Naive thymus-derived CD4-positive, alpha-beta T cell (primary cell): ENCODE measurements at regions of chr3 and their contacts with region 1.

Region 1: DNA sequence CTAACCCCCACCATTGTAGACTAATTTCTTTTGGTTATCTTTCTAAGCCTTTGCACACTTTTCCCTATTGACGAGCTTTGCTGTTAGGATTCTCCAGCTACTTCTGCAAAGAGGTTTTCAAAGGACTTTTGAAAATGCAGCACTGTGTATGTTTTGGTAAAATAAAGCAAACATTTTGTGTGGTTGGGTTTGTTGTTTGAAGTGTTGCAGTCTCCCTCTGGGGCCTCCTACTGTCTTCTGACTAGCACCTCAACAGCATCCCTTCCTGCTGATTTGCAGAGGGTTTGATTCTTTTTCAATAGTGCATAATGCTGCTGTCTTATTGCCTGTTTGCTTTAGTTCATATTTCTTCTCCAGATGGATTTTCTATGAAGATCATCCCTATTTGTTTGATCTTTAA is 775.1 kb upstream of the CFAP20DC start:
- DNase-seq: peak in 1 of 9 donors; percentile 2
- ATAC-seq: no peak
- H3K4me3 ChIP-seq: no peak overlapping the region
- H3K4me3 Mint-ChIP-seq: peak overlapping the region in 2 of 10 donors; percentile 0 to 12
- H3K27ac ChIP-seq: no peak overlapping the region
- H3K27ac Mint-ChIP-seq: peak overlapping the region in 4 of 9 donors; percentile 8 to 65 (median 14)
- H3K4me1 ChIP-seq: peaks cover 0 to 4% of the 10 kb centered on the region in 2 donors
- H3K4me1 Mint-ChIP-seq: peaks cover 13 to 98% (median 84%) of the 10 kb centered on the region in 7 donors
- H3K27me3 ChIP-seq: no peaks in the 10 kb centered on the region
- H3K27me3 Mint-ChIP-seq: no peaks in the 10 kb centered on the region

Region 2: GRCh38 chr3:59839810-59840515 is 15.1 kb after region 1 on chr3:
- CTCF ChIA-PET with region 1: no interaction called
- POLR2A ChIA-PET with region 1: no interaction called
- intact Hi-C with region 1: loop called in 1 of 2 experiments (anchors 2 kb)
- DNase-seq: peak in 5 of 9 donors; percentile 10 to 39 (median 31)
- ATAC-seq: peak; percentile 44
- H3K4me3 ChIP-seq: no peak overlapping the region
- H3K4me3 Mint-ChIP-seq: peak overlapping the region in 6 of 10 donors; percentile 5 to 39 (median 26)
- H3K27ac ChIP-seq: no peak overlapping the region
- H3K27ac Mint-ChIP-seq: peak overlapping the region in 4 of 9 donors; percentile 13 to 54 (median 30)
- H3K4me1 ChIP-seq: peaks cover 11 to 30% of the 10 kb centered on the region in 2 donors
- H3K4me1 Mint-ChIP-seq: peaks cover 15 to 87% (median 78%) of the 10 kb centered on the region in 7 donors
- H3K27me3 ChIP-seq: no peaks in the 10 kb centered on the region
- H3K27me3 Mint-ChIP-seq: no peaks in the 10 kb centered on the region

Region 3: GRCh38 chr3:60192297-60193114 is 367.6 kb after region 1 on chr3:
- CTCF ChIA-PET with region 1: no interaction called
- POLR2A ChIA-PET with region 1: no interaction called
- intact Hi-C with region 1: no loop called
- DNase-seq: peak in 1 of 9 donors; percentile 25
- ATAC-seq: no peak
- H3K4me3 ChIP-seq: no peak overlapping the region
- H3K4me3 Mint-ChIP-seq: peak overlapping the region in 1 of 10 donors; percentile 45
- H3K27ac ChIP-seq: no peak overlapping the region
- H3K27ac Mint-ChIP-seq: peak overlapping the region in 1 of 9 donors; percentile 80
- H3K4me1 ChIP-seq: no peaks in the 10 kb centered on the region
- H3K4me1 Mint-ChIP-seq: peaks cover 0 to 41% (median 7%) of the 10 kb centered on the region in 7 donors
- H3K27me3 ChIP-seq: no peaks in the 10 kb centered on the region
- H3K27me3 Mint-ChIP-seq: no peaks in the 10 kb centered on the region